PC-9 (cell line): ENCODE measurements at regions of chr6 and their contacts with region 1.

Region 1: DNA sequence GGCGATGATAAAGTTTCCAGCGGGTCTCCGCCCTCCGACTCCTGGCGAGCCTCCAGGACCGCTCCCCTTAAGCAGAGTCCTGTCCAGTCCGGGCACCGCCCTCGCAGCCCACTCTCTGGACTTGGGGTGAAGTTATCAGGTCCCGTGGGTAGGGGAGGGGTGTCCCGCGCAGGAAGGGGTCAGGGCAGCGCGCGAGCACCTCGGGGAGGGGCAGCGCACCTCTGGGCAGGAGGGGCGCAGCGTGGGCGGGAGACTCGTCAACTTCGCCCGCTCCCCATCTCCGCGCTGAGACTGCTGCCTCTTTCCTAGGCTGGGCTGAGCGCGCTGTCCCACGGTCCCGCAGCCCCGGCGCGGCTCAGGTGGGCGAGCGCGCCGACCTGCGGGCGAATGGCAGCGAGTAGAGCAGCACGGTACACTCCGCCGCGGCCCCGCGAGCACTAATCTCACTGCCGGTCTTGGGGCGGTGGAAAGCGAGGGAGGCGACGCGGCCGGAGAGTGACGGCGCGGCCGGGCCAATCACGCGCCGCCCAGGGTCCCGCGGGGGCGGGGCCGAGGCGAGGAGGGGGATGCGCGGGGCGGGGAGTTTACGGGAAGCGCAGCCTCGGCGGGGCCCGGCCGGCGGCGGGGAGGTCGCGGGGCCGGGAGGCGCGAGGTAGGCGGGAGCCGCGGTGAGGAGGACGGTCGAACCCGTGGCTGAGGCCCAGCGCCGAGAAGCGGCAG is at the start of gene MAN1A1:
- DNase-seq: peak; percentile 69 to 88
- H3K4me3 ChIP-seq: peak within 1 kb of the TSS; percentile 73
- H3K27ac ChIP-seq: peak within 1 kb of the TSS; percentile 19
- H3K4me1 ChIP-seq: peaks cover 40% of the 10 kb centered on the region
- H3K27me3 ChIP-seq: no peaks in the 10 kb centered on the region
- CTCF ChIP-seq: 0 out of 2 replicates have a peak, but pooled peaks have one; percentile 23
- total RNA-seq, gene MAN1A1: 13.3 and 13.4 TPM in 2 replicates

Region 2: DNA sequence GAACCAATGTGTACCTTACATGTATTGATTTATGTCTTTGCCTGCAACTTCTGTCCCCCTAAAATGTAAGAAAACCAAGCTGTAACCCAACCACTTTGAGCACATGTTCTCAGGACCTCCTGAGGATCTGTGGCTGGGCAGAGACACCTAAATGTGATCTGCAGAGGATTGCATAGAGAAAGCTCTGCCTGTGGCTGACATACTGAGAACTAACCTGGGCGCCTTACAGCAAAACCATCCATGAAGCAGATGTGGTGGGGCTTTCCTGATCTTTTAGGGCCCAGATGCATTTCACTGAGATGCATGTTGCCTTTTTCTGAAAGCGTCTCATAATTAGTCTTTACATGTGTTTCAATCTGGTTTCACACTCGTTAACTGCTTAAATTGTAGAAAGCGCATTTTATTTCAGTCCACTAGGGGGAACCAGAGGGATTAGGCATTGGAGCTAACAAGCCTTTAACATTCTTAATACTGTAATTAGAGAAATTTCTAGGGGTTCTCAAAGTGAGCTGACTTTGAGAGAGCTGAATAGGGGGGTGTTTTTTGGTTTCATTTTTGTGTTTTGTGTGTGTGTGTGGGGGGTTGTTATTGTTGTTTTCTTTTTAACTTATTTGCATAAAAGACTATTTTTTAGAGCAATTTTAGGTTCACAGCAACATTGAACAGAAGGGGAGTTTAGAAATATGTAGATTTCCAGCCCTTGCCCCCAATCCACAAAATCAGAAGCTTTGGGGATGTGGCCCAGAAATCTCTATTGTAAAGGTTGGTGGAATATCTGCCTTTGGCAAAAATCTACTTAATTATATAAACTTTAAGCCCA is 220.1 kb before region 1 on chr6:
- CTCF ChIA-PET with region 1: interaction called, 3 read pairs
- POLR2A ChIA-PET with region 1: interaction called, 4 read pairs
- intact Hi-C with region 1: loop called (anchors 1 kb)
- DNase-seq: peak; percentile 20 to 68
- H3K4me3 ChIP-seq: 0 out of 2 replicates have a peak overlapping the region, but pooled peaks have one; percentile 2
- H3K27ac ChIP-seq: peak overlapping the region; percentile 55
- H3K4me1 ChIP-seq: peaks cover 35% of the 10 kb centered on the region
- H3K27me3 ChIP-seq: no peaks in the 10 kb centered on the region
- CTCF ChIP-seq: peak; percentile 96

Region 3: GRCh38 chr6:119360262-119360915 is 10.9 kb after region 1 on chr6:
- CTCF ChIA-PET with region 1: no interaction called
- POLR2A ChIA-PET with region 1: no interaction called
- intact Hi-C with region 1: no loop called
- DNase-seq: no peak
- H3K4me3 ChIP-seq: no peak overlapping the region
- H3K27ac ChIP-seq: no peak overlapping the region
- H3K4me1 ChIP-seq: no peaks in the 10 kb centered on the region
- H3K27me3 ChIP-seq: no peaks in the 10 kb centered on the region
- CTCF ChIP-seq: no peak

Region 4: DNA sequence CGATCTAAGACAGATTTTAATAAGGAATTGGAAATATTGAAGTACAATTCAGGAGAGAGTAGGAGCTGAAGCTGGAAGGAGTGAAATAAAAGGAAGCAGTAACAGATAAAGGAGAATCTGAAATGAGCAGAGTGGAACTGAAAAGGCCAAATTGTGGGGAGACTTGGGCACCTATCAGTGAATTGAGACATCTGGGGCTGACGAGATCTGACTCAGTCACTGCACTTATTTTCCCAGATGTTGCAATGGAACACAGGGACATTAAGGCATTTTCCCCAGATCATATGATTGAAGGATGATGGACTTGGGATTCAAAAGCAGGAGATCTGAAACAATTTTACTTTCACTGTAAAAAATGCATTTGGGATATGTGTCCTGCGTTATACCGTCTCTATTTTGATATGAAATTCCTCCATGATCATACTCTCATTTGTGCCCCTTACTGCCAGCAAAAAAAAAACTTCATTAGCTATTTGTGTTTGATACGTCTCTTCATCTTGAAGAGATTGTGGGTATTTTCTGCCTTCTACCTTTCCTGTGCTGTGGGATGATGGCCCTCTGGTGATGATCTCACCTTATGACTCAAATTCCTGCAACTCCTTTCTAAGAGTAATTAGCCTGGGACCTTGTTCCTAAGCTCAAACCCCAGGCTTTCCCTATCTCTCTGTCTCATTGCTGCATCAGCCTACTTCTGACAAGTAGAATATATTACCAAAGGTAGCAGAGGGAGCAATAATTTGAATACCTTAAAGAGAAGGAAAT is 278.6 kb after region 1 on chr6:
- CTCF ChIA-PET with region 1: no interaction called
- POLR2A ChIA-PET with region 1: no interaction called
- intact Hi-C with region 1: loop called (anchors 2 kb)
- DNase-seq: peak in 1 of 2 experiments; percentile 44
- H3K4me3 ChIP-seq: no peak overlapping the region
- H3K27ac ChIP-seq: peak overlapping the region; percentile 61
- H3K4me1 ChIP-seq: peaks cover 29% of the 10 kb centered on the region
- H3K27me3 ChIP-seq: no peaks in the 10 kb centered on the region
- CTCF ChIP-seq: no peak

Region 5: GRCh38 chr6:119742188-119742803 is 392.8 kb after region 1 on chr6:
- CTCF ChIA-PET with region 1: no interaction called
- POLR2A ChIA-PET with region 1: no interaction called
- intact Hi-C with region 1: loop called (anchors 5 kb)
- DNase-seq: peak in 1 of 2 experiments; percentile 45
- H3K4me3 ChIP-seq: peak overlapping the region; percentile 12; the same call in 1 of the 2 replicates
- H3K27ac ChIP-seq: no peak overlapping the region
- H3K4me1 ChIP-seq: no peaks in the 10 kb centered on the region
- H3K27me3 ChIP-seq: no peaks in the 10 kb centered on the region
- CTCF ChIP-seq: peak; percentile 99

Region 6: DNA sequence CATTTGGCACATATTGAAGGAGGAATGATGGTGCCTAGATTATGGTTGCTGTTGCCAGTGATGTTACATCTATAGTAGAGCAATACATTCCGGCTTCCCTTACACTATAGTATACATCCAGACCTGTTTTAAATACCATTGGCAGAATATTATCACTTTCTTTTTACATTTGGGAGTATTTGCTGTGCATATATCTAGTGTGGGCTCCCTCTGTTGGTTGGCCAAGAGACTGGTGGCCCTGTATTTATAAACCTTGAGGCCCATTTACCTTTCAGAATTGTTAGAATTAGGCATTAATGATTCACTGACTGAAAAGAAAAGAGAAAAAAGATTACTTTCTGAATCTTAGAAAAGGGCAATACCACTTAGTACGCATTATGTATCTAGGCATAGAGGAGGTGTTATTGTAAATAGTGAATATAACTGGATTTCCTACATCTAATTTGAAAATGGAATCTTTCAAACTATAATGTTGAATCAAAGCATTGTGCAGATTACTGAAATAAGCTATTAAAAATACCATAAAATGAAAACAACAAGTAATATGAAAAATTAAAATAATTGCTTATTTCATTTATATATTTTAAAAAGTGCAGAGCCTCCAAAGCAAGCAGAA is 628.9 kb after region 1 on chr6:
- CTCF ChIA-PET with region 1: no interaction called
- POLR2A ChIA-PET with region 1: no interaction called
- intact Hi-C with region 1: loop called (anchors 2 kb)
- DNase-seq: no peak
- H3K4me3 ChIP-seq: no peak overlapping the region
- H3K27ac ChIP-seq: no peak overlapping the region
- H3K4me1 ChIP-seq: no peaks in the 10 kb centered on the region
- H3K27me3 ChIP-seq: no peaks in the 10 kb centered on the region
- CTCF ChIP-seq: peak; percentile 81